ENCODE measurements at regions of chr2 and their contacts with region 1.

Region 1: GRCh38 chr2:31138037-31138962 is at the start of gene GALNT14:
- DNase-seq: peak; percentile 68
- ATAC-seq: peak; percentile 85
- H3K4me3 Mint-ChIP-seq: peak within 1 kb of the TSS; percentile 67
- H3K27ac Mint-ChIP-seq: peak within 1 kb of the TSS; percentile 62
- H3K4me1 Mint-ChIP-seq: peaks cover 8% of the 10 kb centered on the region
- H3K27me3 Mint-ChIP-seq: peaks cover 51% of the 10 kb centered on the region
- CTCF ChIP-seq: peak; percentile 58
- total RNA-seq, gene GALNT14: 1.1 to 1.9 TPM

Region 2: DNA sequence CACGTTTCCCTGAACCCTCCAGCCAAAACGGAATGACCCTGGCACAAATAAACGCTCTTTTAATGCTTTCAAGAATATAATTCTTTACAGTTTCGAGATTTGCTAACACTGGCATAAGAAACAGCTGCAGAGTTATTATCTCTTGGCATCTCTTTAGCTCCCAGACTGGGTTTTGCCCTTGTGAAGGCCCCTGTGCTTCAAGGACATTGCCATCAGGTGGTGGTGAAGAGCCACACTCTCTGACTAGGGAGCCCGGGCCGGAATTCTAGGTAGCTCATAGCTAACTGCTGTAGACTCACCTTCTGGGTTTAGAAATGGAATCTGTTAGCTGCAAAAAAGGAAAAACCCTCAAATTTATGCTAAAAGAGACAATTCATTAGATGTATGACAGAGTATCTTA is 13.2 kb after region 1 on chr2:
- CTCF ChIA-PET with region 1: interaction called, 11 read pairs
- POLR2A ChIA-PET with region 1: no interaction called
- intact Hi-C with region 1: no loop called
- DNase-seq: no peak
- ATAC-seq: no peak
- H3K4me3 Mint-ChIP-seq: no peak overlapping the region
- H3K27ac Mint-ChIP-seq: no peak overlapping the region
- H3K4me1 Mint-ChIP-seq: no peaks in the 10 kb centered on the region
- H3K27me3 Mint-ChIP-seq: no peaks in the 10 kb centered on the region
- CTCF ChIP-seq: no peak

Region 3: DNA sequence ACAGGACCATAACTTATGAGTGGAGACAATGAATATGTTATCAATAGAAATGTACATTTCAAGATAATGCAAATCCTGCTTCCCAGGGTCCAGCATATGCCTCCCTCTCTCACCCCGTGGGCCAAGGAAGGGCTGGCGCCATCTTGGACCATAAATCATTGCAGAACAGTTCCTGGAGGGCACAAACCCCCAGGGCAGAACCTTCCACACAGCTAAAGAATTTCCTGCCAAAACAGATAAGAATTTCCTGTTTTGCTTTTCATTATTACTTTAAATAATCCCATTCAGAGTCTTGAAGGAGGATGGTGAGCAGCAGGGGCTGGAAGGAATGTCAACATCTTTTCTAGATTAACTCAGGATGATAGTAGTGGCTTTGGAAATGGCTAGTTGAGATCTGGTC is 149.4 kb after region 1 on chr2:
- CTCF ChIA-PET with region 1: no interaction called
- POLR2A ChIA-PET with region 1: no interaction called
- intact Hi-C with region 1: no loop called
- DNase-seq: no peak
- ATAC-seq: no peak
- H3K4me3 Mint-ChIP-seq: no peak overlapping the region
- H3K27ac Mint-ChIP-seq: no peak overlapping the region
- H3K4me1 Mint-ChIP-seq: no peaks in the 10 kb centered on the region
- H3K27me3 Mint-ChIP-seq: no peaks in the 10 kb centered on the region
- CTCF ChIP-seq: no peak

Region 4: DNA sequence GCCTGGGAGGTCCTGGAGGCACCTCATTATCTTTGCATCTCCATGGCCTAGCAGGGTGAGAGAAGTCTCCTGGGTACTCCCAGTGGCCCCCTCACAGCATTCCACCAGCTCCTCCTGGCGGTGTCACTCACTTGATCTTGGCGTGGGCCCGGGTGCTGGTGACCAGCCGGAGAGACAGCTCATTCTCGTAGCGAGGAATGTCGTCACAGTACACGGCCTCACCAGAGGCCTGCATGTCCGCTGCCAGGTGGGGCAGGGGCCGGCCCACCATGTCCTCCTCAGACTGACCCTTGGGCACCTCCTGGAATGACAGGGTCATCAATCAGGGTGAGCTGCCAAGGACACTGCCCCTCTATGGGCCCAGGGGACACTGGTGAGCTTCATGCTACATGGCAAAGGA is 233.8 kb after region 1 on chr2:
- CTCF ChIA-PET with region 1: no interaction called
- POLR2A ChIA-PET with region 1: no interaction called
- intact Hi-C with region 1: no loop called
- DNase-seq: no peak
- ATAC-seq: no peak
- H3K4me3 Mint-ChIP-seq: no peak overlapping the region
- H3K27ac Mint-ChIP-seq: no peak overlapping the region
- H3K4me1 Mint-ChIP-seq: no peaks in the 10 kb centered on the region
- H3K27me3 Mint-ChIP-seq: no peaks in the 10 kb centered on the region
- CTCF ChIP-seq: no peak